ENCODE measurements at regions of chr7 and their contacts with region 1.

Region 1: DNA sequence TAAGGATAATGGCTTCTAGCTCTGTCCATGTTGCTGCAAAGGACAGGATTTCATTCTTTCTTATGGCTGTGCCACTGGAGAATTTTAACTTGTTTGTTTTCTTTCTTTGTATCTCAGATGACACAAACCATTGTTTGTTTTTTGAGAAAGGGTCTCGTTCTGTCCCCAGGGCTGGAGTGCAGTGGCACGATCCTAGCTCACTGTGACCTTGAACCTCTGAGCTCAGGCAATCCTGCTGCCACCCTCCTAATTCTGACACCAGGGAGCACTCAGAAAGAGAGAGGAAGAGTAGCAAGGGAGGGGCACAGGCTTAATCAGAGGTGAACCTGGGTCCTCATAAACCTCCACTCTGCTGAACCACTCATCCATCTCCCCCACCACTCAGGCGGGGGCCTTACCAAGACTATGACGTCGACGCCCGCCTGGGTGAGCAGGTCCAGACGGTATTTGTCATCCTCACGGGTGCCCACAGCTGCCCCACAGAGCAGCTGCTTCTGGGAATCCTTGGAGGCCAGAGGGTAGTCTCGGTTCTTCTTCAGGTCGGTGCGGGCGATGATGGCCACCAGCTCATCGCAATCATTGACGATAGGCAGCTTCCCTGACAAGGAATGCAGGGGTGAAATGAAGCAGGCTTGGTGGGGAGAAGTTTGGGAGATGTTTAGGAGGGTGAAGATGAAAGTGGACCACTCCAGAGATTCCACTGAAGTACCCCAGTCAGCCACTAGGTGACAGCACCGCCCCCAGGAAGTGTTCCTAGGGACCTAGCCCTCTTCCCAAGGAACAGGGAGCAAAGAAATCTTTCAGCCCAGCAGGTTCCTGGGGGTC is 11.6 kb downstream of the IMPDH1 start:
- DNase-seq: no peak
- H3K4me3 Mint-ChIP-seq: no peak overlapping the region
- H3K27ac Mint-ChIP-seq: no peak overlapping the region
- H3K4me1 Mint-ChIP-seq: peaks cover 7% of the 10 kb centered on the region
- H3K27me3 Mint-ChIP-seq: no peaks in the 10 kb centered on the region

Region 2: DNA sequence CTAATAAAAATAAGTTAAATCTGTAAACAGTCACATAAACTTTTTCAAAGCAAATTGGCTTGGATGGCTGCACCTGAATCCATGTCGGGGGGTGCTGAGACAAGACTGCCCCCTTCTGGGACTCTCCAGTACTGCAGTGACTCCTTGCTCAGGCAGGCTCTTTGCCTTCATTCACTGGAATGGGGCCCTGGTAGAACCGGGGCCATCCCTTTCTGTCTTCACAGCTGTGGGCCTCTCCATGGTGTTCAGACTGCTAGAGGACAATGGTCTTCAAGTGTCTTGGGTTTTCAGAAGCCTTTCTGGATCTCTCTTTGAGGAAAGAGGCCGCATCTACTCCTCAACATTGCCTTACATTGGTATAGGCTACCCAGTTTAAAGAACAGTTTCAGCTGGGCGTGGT is 27.6 kb after region 1 on chr7:
- intact Hi-C with region 1: loop called (anchors 1 kb)
- DNase-seq: peak; percentile 68
- H3K4me3 Mint-ChIP-seq: no peak overlapping the region
- H3K27ac Mint-ChIP-seq: no peak overlapping the region
- H3K4me1 Mint-ChIP-seq: peaks cover 22% of the 10 kb centered on the region
- H3K27me3 Mint-ChIP-seq: peaks cover 6% of the 10 kb centered on the region